ENCODE measurements at regions of chr17 and their contacts with region 1.

Region 1: DNA sequence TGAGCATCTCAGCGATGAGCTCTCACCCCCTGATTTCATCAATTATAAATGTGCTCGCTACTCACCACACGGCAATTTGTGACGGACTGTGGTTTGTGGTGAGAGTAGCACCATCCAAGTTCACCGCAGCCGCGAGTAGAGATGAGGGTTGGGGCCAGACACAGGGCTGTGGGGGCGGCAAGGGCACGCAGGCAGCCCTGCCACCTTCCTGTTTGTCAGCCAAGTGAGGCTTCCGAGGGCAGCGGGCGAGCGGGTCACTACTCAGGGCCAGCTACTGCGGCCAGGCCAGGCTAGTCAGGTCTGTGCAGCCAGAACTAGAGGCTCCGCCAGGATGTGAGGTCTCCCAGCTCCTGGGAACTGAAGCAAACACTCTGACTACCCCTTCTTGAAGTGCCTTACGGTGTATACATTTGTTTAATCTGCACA is 39.6 kb upstream of the MEOX1 start:
- DNase-seq: no peak
- H3K4me3 ChIP-seq: no peak overlapping the region
- CTCF ChIP-seq: no peak

Region 2: DNA sequence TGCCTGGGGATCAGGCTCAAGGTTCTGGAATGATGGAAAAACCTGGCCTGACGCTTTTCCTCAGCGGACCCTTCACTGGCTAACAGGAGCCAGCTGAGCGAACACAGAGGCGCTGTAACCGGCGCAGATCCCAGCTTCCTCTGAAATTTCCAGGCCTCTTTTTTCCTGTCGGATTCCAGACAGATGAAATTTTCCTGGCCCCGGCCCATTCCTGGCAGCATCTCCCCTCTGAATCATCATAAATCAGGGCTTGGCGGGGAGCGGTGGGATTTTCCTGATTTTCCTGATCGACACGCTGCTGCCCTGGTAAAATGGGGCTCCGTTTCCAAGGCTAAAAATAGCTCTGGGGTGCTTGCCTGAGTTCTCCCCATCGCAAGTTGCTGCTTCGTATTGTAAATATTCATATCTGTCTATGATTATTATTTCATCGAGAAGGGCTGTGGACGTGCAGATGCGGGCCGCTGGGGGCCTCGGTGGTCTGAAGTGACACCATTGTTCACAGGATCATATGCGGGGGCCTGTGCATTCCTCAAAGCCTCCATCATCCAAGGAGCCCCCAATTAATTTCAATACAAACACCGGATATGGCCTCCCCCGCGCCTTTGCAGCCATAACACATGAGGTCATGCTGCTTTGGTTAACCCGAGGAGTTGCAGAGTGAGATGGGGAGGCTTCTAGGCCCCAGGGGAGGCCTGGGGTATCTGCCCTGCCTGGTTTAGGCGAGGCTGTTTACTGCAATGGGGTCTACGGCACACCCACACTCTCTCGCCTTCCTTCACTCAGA is 109.4 kb before region 1 on chr17:
- CTCF ChIA-PET with region 1: no interaction called
- POLR2A ChIA-PET with region 1: no interaction called
- DNase-seq: no peak
- H3K4me3 ChIP-seq: peak overlapping the region; percentile 10; the same call in 1 of the 2 replicates
- CTCF ChIP-seq: no peak

Region 3: GRCh38 chr17:43734376-43734775 is 33.0 kb after region 1 on chr17:
- CTCF ChIA-PET with region 1: interaction called, 47 read pairs
- POLR2A ChIA-PET with region 1: no interaction called
- DNase-seq: no peak
- H3K4me3 ChIP-seq: no peak overlapping the region
- CTCF ChIP-seq: no peak

Region 4: DNA sequence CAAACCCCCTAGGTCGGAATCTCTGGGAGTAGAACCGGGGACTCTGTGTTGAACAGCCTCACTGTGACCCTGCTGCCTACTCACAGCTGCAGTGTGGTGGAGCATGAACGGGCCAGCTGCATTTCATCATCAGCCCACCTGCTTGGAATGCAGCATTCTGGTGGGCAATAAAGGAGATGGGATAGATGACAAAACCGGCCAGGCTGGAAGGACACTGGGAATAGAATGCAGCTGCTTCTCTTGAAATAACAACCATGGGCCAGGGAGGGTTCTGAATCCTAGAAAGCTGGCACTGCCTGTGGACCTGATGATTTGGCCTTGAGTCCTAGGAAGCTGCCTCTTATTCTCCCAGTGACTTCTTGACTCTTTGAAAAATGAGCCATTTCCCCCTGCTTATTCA is 102.4 kb after region 1 on chr17:
- CTCF ChIA-PET with region 1: no interaction called
- POLR2A ChIA-PET with region 1: no interaction called
- DNase-seq: no peak
- H3K4me3 ChIP-seq: no peak overlapping the region
- CTCF ChIP-seq: no peak

Region 5: DNA sequence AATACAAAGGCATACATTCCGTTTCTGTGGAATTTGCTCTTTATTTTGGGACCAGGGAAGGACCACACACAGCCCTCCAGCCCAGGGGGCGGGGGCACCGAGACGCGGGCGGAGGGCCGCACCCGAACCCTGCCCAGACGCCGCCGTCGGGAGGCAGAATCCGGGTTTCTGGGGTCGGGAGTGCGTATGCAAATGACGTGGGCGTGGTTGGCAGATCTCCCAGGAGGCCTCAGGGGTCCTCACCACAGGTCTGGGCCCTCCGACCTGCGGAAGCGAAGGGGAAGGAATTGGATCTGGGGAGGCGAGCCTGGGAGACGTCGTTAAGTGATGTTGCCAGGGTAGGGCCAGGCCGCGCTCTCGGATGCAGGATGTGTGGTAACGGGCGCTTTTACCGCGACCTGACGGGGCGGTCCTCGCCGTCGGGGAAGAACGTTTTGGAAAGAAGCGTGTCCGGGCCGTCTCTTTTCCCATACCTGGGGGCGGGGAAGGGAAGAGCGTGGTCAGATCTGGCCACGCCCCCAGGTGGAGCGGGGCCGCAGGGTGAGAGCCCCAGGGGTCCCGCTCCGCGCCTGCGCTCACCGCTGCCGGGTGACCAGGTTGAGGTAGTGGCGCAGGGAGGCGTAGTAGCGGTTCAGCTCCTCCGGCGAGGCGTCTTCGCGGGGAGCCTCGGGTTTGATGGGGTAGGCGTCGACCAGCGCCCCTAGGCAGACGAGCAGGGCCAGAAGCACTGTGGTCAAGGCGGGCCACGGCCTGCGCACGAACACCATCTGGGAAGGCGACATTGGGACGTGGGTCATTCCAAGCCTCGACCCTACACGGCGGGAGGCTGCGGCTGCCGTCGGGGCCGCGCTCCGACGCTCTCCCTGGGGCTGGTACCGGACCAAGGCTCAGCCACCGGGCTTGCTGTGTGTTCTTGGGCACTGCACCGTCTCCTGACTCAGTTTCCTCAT is 251.7 kb after region 1 on chr17:
- CTCF ChIA-PET with region 1: no interaction called
- POLR2A ChIA-PET with region 1: no interaction called
- DNase-seq: no peak
- H3K4me3 ChIP-seq: no peak overlapping the region
- CTCF ChIP-seq: no peak